MCF 10A (cell line): ENCODE measurements at regions of chr5 and their contacts with region 1.

Region 1: DNA sequence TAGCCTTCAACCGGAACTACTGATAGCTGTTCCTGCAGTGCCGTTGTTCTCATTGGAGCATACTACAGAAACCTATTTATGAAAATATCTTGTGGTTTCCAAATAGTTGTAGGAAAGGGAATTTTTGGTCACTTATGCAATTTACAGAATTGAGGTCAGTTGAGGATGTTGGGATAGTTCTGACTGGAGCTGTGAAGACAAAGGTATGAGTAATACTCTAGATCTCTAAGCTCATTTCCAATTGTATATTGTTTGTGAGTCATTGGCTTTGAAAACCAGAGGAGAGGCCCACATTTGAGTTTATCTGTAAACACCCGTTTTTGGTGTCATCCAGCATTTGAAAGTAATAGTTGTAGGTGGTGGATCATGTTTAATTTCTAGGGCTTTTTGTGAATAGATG is 561.3 kb upstream of the WWC1 start:
- DNase-seq: peak; percentile 94
- H3K4me3 Mint-ChIP-seq: no peak overlapping the region
- H3K27ac Mint-ChIP-seq: peak overlapping the region; percentile 32
- H3K4me1 Mint-ChIP-seq: peaks cover 15% of the 10 kb centered on the region
- H3K27me3 Mint-ChIP-seq: no peaks in the 10 kb centered on the region
- CTCF ChIP-seq: no peak

Region 2: DNA sequence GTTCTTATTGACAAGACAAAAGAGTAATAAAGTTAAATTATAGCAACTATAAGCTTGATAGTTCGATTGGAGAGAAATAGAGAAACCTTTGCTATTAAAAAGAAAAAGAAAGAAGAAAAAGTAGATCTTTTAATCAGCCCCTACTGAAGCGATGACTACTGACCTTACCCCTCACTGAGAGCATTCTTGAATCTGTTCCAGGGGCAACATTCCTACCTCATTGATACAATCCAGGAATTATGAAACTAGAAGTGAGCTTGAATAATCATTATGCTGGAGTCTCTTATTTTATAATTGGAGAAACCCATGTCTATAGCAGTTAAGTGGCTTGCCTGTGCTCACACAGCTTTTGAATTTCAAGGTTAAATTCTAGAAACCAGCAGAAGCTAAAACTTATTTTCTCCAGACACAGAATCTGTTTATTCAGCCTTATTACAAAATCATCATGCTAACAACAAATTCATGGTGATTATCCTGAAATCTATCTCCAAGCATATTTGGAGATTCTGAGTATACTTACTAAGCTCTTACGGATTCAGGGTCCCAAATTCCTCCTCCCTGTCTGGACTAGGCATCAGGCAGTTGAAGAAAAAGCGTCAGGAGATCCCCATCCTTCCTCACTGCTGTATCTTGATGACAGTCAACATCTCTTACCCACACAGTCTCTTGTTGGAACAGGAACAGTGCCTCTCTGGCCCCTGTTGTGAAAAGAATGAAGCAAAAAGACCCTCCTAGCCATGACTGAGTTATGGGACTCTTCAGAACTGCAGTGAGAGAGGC is 13.8 kb after region 1 on chr5:
- CTCF ChIA-PET with region 1: interaction called, 5 read pairs
- POLR2A ChIA-PET with region 1: interaction called, 11 read pairs
- intact Hi-C with region 1: no loop called
- DNase-seq: peak; percentile 90
- H3K4me3 Mint-ChIP-seq: no peak overlapping the region
- H3K27ac Mint-ChIP-seq: peak overlapping the region; percentile 5
- H3K4me1 Mint-ChIP-seq: peaks cover 18% of the 10 kb centered on the region
- H3K27me3 Mint-ChIP-seq: no peaks in the 10 kb centered on the region
- CTCF ChIP-seq: no peak

Region 3: GRCh38 chr5:167759057-167759821 is 29.1 kb after region 1 on chr5:
- CTCF ChIA-PET with region 1: interaction called, 5 read pairs
- POLR2A ChIA-PET with region 1: interaction called, 17 read pairs
- intact Hi-C with region 1: no loop called
- DNase-seq: peak; percentile 99
- H3K4me3 Mint-ChIP-seq: no peak overlapping the region
- H3K27ac Mint-ChIP-seq: peak overlapping the region; percentile 26
- H3K4me1 Mint-ChIP-seq: peaks cover 20% of the 10 kb centered on the region
- H3K27me3 Mint-ChIP-seq: no peaks in the 10 kb centered on the region
- CTCF ChIP-seq: no peak

Region 4: DNA sequence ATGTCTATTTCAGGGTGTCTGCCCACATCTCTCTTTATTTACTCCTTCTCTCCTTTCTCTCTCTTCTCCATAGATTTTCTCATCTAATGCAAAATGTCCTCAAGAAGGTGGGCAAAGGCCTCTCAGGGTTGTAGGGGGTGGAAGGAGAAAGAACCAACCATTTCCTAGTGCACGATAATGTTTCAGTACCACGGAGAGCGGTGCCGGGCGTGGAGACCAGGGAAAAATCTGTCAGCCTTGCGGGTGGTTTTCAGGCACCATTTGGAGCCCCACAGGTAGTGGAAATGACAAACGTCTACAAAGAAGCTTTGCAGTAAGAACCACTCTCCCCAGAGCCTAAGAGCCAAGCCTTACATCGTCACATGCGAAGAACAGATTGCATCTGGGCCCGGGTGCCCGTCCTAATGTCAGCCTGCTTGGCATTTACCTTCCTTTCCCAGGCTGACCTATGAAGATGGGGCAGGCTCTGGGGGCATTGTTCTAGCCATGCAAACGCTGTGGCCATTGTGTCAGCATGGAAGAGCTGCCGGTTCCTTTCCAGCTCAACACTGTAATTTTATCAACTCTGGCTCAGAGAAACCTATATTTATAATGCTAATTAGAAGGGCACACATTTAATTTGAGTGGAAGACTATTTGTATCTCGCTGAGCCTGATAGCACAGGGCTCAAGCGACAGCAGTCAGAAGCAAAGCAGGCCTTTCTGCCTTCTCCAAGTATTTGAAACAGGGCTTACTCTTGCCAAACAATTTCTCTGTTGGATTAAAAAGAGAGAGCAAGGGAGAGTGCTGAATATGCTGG is 131.2 kb after region 1 on chr5:
- CTCF ChIA-PET with region 1: no interaction called
- POLR2A ChIA-PET with region 1: no interaction called
- intact Hi-C with region 1: no loop called
- DNase-seq: peak; percentile 66
- H3K4me3 Mint-ChIP-seq: no peak overlapping the region
- H3K27ac Mint-ChIP-seq: no peak overlapping the region
- H3K4me1 Mint-ChIP-seq: no peaks in the 10 kb centered on the region
- H3K27me3 Mint-ChIP-seq: no peaks in the 10 kb centered on the region
- CTCF ChIP-seq: no peak